ENCODE measurements at regions of chr15 and their contacts with region 1.

Region 1: GRCh38 chr15:60905587-60905986 is 323.5 kb downstream of the RORA start:
- DNase-seq: peak; percentile 36 to 50 (median 43)
- H3K4me3 ChIP-seq: no peak overlapping the region
- H3K4me3 Mint-ChIP-seq: no peak overlapping the region
- H3K27ac ChIP-seq: no peak overlapping the region
- H3K27ac Mint-ChIP-seq: peak overlapping the region in 1 of 7 donors; percentile 32
- H3K4me1 ChIP-seq: no peaks in the 10 kb centered on the region
- H3K4me1 Mint-ChIP-seq: peaks cover 3 to 20% (median 5%) of the 10 kb centered on the region in 4 donors
- H3K27me3 ChIP-seq: no peaks in the 10 kb centered on the region
- H3K27me3 Mint-ChIP-seq: no peaks in the 10 kb centered on the region

Region 2: GRCh38 chr15:60672400-60672799 is 233.2 kb before region 1 on chr15:
- CTCF ChIA-PET with region 1: interaction called, 10 read pairs
- POLR2A ChIA-PET with region 1: no interaction called
- intact Hi-C with region 1: loop called (anchors 1 kb)
- DNase-seq: peak in 1 of 5 donors; percentile 18
- H3K4me3 ChIP-seq: no peak overlapping the region
- H3K4me3 Mint-ChIP-seq: no peak overlapping the region
- H3K27ac ChIP-seq: no peak overlapping the region
- H3K27ac Mint-ChIP-seq: peak overlapping the region in 1 of 7 donors; percentile 6
- H3K4me1 ChIP-seq: peaks cover 18% of the 10 kb centered on the region
- H3K4me1 Mint-ChIP-seq: peaks cover 10 to 27% (median 20%) of the 10 kb centered on the region in 4 donors
- H3K27me3 ChIP-seq: no peaks in the 10 kb centered on the region
- H3K27me3 Mint-ChIP-seq: no peaks in the 10 kb centered on the region